Activated CD4-positive, alpha-beta T cell treated with anti-CD3 and anti-CD28 coated beads for 36 hours (primary cell): ENCODE measurements at regions of chr17 and their contacts with region 1.

Region 1: GRCh38 chr17:35747540-35748017 is 5.5 kb downstream of the GAS2L2 start:
- DNase-seq: peak; percentile 90
- ATAC-seq: peak; percentile 91
- H3K4me3 Mint-ChIP-seq: no peak overlapping the region
- H3K27ac Mint-ChIP-seq: no peak overlapping the region
- H3K4me1 Mint-ChIP-seq: peaks cover 23% of the 10 kb centered on the region
- H3K27me3 Mint-ChIP-seq: peaks cover 33% of the 10 kb centered on the region

Region 2: DNA sequence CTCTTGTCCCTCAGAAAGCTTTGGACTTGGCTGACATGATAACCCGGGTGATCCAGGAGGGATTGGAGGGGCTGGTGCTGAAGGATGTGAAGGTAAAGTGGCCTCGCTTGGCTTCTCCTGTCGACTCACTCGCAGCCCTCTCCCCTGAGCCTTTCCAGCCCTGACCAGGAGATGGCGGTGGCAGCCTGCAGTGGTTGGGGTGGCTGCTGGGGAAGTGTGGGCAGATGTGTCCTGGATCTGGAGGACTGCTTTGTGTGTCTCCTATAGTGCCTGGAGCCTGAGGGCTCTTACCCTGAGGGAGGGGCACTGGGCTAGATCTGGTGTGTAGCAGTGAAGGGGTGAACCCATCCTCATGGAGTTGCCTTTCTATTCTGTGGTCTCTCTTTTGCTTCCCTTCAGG is 749.4 kb before region 1 on chr17:
- CTCF ChIA-PET with region 1: no interaction called
- POLR2A ChIA-PET with region 1: no interaction called
- intact Hi-C with region 1: loop called in 1 of 2 experiments (anchors 10 kb)
- DNase-seq: peak; percentile 89
- ATAC-seq: peak; percentile 100
- H3K4me3 Mint-ChIP-seq: no peak overlapping the region
- H3K27ac Mint-ChIP-seq: peak overlapping the region; percentile 51
- H3K4me1 Mint-ChIP-seq: peaks cover 6% of the 10 kb centered on the region
- H3K27me3 Mint-ChIP-seq: no peaks in the 10 kb centered on the region

Region 3: DNA sequence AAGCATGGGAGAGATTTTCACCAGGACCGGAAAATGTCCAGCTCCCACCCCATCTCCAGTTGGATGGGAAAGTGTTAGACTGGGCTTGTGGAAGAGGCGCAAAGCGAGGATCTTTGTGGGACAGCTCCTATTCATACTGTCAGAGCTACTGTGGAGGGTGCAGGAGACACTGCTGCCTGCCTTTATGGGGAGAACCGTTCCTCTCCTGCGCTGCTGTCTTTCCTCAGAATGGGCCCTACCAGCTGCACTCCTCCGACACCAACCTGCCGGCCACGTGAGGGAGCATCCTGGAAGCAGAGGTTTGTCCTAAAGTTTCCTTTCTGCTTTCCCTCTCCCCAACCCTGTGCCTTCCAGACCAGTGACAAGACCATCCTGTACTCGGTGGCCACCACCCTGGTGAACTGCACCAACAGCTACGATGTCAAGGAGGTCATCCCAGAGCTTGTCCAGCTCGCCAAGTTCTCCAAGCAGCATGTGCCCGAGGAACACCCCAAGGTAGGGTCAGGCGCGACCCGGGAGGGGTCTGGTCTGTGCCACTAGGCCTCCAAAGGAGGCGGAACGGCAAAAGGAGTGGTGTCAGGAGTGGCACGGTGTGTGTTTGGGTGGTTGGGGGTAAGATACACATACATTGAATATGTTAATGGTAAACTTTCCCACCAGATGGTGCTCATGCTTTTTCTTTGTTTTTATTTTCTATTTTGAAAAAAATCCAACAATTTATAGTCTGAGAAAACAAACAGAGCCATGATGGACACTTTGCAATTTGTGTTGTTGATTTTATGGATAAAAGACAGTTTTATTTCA is 576.4 kb before region 1 on chr17:
- CTCF ChIA-PET with region 1: interaction called, 4 read pairs
- POLR2A ChIA-PET with region 1: no interaction called
- intact Hi-C with region 1: loop called (anchors 1 to 5 kb)
- DNase-seq: peak; percentile 32
- ATAC-seq: peak; percentile 76
- H3K4me3 Mint-ChIP-seq: no peak overlapping the region
- H3K27ac Mint-ChIP-seq: peak overlapping the region; percentile 47
- H3K4me1 Mint-ChIP-seq: peaks cover 39% of the 10 kb centered on the region
- H3K27me3 Mint-ChIP-seq: no peaks in the 10 kb centered on the region

Region 4: GRCh38 chr17:35352284-35352683 is 395.3 kb before region 1 on chr17:
- CTCF ChIA-PET with region 1: no interaction called
- POLR2A ChIA-PET with region 1: no interaction called
- intact Hi-C with region 1: no loop called
- DNase-seq: no peak
- ATAC-seq: no peak
- H3K4me3 Mint-ChIP-seq: no peak overlapping the region
- H3K27ac Mint-ChIP-seq: no peak overlapping the region
- H3K4me1 Mint-ChIP-seq: peaks cover 14% of the 10 kb centered on the region
- H3K27me3 Mint-ChIP-seq: no peaks in the 10 kb centered on the region

Region 5: GRCh38 chr17:35555695-35556094 is 191.9 kb before region 1 on chr17:
- CTCF ChIA-PET with region 1: interaction called, 3 read pairs
- POLR2A ChIA-PET with region 1: no interaction called
- intact Hi-C with region 1: loop called in 1 of 2 experiments (anchors 2 kb)
- DNase-seq: no peak
- ATAC-seq: no peak
- H3K4me3 Mint-ChIP-seq: no peak overlapping the region
- H3K27ac Mint-ChIP-seq: no peak overlapping the region
- H3K4me1 Mint-ChIP-seq: peaks cover 1% of the 10 kb centered on the region
- H3K27me3 Mint-ChIP-seq: peaks cover 8% of the 10 kb centered on the region

Region 6: DNA sequence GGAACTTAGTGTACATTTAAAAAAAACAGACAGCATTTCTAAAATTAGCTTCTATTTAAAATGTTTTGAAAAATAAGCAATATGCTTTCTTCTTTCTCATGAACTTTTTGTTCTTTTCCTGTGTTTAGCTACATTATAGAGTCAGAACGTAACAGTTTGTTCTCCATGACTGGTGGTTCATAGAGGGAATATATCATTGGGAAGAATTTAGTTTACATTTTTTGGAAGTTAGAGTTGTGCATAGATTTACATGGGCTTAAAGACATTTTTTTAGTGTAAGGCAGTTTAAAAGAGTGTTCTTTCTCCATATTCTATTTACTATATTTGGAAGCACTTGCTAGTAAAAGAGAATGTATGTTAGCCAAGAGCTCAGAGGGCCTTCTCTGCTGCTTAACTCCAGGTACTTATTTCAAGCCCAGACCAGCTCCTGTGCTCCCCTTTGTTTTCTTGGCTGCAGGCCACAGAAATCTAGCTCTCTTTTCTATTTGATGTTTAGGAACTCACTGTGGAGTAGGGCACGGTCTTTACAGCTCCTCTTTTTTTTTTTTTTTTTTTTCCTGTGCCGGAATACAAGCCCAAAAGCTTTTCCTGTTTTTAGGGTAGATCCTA is 140.2 kb before region 1 on chr17:
- CTCF ChIA-PET with region 1: interaction called, 99 read pairs
- POLR2A ChIA-PET with region 1: no interaction called
- intact Hi-C with region 1: no loop called
- DNase-seq: no peak
- ATAC-seq: no peak
- H3K4me3 Mint-ChIP-seq: no peak overlapping the region
- H3K27ac Mint-ChIP-seq: no peak overlapping the region
- H3K4me1 Mint-ChIP-seq: no peaks in the 10 kb centered on the region
- H3K27me3 Mint-ChIP-seq: no peaks in the 10 kb centered on the region

Region 7: GRCh38 chr17:35612924-35613521 is 134.6 kb before region 1 on chr17:
- CTCF ChIA-PET with region 1: interaction called, 99 read pairs
- POLR2A ChIA-PET with region 1: no interaction called
- intact Hi-C with region 1: loop called (anchors 1 kb)
- DNase-seq: peak; percentile 66
- ATAC-seq: peak; percentile 39
- H3K4me3 Mint-ChIP-seq: no peak overlapping the region
- H3K27ac Mint-ChIP-seq: no peak overlapping the region
- H3K4me1 Mint-ChIP-seq: no peaks in the 10 kb centered on the region
- H3K27me3 Mint-ChIP-seq: no peaks in the 10 kb centered on the region

Region 8: DNA sequence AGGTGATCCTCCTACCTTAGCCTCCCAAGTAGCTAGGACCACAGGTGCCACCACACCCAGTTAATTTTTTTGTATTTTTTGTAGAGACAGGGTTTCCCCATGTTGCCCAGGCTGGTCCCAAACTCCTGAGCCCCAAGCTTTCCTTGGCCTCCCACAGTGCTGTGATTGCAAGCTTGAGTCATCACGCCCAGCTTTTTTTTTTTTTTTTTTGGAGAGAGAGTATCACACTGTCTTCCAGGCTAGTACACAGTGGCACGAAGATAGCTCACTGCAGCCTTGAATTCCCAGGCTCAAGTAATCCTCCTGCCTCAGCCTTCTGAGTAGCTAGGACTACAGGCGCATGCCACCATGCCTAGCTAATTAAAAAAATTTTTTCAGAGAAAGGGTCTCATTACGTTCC is 93.9 kb after region 1 on chr17:
- CTCF ChIA-PET with region 1: no interaction called
- POLR2A ChIA-PET with region 1: no interaction called
- intact Hi-C with region 1: no loop called
- DNase-seq: no peak
- ATAC-seq: peak; percentile 42
- H3K4me3 Mint-ChIP-seq: no peak overlapping the region
- H3K27ac Mint-ChIP-seq: no peak overlapping the region
- H3K4me1 Mint-ChIP-seq: peaks cover 5% of the 10 kb centered on the region
- H3K27me3 Mint-ChIP-seq: no peaks in the 10 kb centered on the region

Region 9: DNA sequence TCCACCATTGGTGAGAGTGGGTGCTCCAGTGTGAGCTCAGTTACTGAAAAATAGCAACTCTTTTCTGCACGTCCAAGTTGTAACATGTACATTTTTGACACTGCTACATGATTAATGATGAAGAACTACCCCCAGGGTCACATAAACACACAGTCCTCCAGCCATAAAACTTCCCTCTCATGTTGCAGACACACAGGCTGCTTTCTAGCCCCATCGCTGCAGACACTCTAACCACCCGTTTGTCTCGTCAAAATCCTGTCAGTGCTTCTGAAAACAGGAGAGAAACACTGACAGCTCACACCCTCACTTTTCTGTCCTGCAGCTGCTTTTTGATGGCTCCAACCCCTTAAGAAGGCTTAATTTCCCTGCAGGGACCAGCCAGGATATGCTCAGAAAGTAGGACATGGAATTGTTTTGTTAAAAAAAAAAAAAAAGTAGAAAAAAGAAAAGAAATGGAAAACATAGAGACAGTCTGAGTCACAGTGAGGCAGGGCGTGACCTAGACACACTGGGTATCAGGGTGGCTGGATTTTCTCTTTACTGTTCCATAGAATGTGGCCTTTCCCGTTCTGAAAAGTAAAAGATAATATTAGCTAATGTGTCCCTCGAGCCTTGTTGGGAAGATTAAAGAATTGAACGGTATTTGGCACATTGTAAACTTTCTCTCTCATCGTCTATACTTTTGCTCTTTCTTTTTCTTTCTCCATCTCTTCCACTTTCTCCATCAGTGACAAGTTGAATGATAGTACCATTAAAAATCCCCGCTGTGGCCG is 153.3 kb after region 1 on chr17:
- CTCF ChIA-PET with region 1: no interaction called
- POLR2A ChIA-PET with region 1: no interaction called
- intact Hi-C with region 1: no loop called
- DNase-seq: no peak
- ATAC-seq: no peak
- H3K4me3 Mint-ChIP-seq: peak overlapping the region; percentile 6
- H3K27ac Mint-ChIP-seq: peak overlapping the region; percentile 44
- H3K4me1 Mint-ChIP-seq: peaks cover 26% of the 10 kb centered on the region
- H3K27me3 Mint-ChIP-seq: peaks cover 3% of the 10 kb centered on the region